Activated naive CD4-positive, alpha-beta T cell treated with anti-CD3 and anti-CD28 coated beads for 36 hours (primary cell): ENCODE measurements at regions of chr17 and their contacts with region 1.

Region 1: GRCh38 chr17:63697341-63698286 is 2.3 kb downstream of the LIMD2 start:
- DNase-seq: peak; percentile 88
- H3K4me3 Mint-ChIP-seq: peak overlapping the region; percentile 83
- H3K27ac Mint-ChIP-seq: peak overlapping the region; percentile 92
- H3K4me1 Mint-ChIP-seq: peaks cover 62% of the 10 kb centered on the region
- H3K27me3 Mint-ChIP-seq: no peaks in the 10 kb centered on the region

Region 2: GRCh38 chr17:63425482-63425881 is 272.1 kb before region 1 on chr17:
- CTCF ChIA-PET with region 1: interaction called, 4 read pairs
- intact Hi-C with region 1: loop called (anchors 5 kb)
- DNase-seq: peak; percentile 85
- H3K4me3 Mint-ChIP-seq: no peak overlapping the region
- H3K27ac Mint-ChIP-seq: no peak overlapping the region
- H3K4me1 Mint-ChIP-seq: peaks cover 21% of the 10 kb centered on the region
- H3K27me3 Mint-ChIP-seq: no peaks in the 10 kb centered on the region

Region 3: DNA sequence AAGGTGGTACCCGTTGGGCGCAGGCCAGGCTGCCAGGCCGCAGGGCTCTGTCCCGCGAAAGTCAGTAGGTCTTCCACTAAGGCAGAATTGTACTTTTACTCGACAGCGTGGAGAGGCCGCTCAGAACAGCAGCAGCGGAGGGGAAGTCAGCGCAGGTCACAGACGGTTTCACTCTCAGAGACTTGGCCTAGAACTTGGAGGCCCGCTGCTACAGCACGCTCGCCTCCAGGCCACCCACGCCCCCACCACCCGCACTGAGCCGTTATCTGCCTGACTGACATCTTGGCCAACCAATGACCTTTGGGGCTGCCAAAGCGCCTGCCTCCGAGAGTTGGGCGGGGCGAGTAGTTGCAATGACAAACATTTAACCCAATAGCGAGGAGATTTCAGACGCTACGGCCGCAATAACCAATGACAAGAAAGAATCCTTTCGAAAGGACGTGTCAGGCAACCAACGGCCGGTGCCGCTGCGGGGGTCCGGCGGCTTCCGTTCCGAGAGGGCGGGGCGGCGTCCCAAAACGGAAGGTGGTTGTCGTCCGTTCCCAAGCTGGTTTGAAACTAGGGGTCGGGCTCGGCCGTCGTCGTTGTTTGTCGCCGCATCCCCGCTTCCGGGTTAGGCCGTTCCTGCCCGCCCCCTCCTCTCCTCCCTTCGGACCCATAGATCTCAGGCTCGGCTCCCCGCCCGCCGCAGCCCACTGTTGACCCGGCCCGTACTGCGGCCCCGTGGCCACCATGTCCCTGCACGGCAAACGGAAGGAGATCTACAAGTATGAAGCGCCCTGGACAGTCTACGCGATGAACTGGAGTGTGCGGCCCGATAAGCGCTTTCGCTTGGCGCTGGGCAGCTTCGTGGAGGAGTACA is 147.4 kb before region 1 on chr17 and contains the start of gene DCAF7:
- CTCF ChIA-PET with region 1: no interaction called
- intact Hi-C with region 1: loop called (anchors 2 kb)
- DNase-seq: peak; percentile 100
- H3K4me3 Mint-ChIP-seq: peak within 1 kb of the TSS; percentile 82
- H3K27ac Mint-ChIP-seq: peak within 1 kb of the TSS; percentile 94
- H3K4me1 Mint-ChIP-seq: peaks cover 33% of the 10 kb centered on the region
- H3K27me3 Mint-ChIP-seq: no peaks in the 10 kb centered on the region
- total RNA-seq, gene DCAF7: 102 to 103 TPM

Region 4: GRCh38 chr17:63709098-63709497 is 11.5 kb after region 1 on chr17:
- CTCF ChIA-PET with region 1: interaction called, 14 read pairs
- intact Hi-C with region 1: loop called (anchors 1 kb)
- DNase-seq: no peak
- H3K4me3 Mint-ChIP-seq: no peak overlapping the region
- H3K27ac Mint-ChIP-seq: peak overlapping the region; percentile 57
- H3K4me1 Mint-ChIP-seq: peaks cover 59% of the 10 kb centered on the region
- H3K27me3 Mint-ChIP-seq: no peaks in the 10 kb centered on the region

Region 5: GRCh38 chr17:63741221-63742049 is 43.8 kb after region 1 on chr17 and contains the start of gene STRADA:
- CTCF ChIA-PET with region 1: interaction called, 6 read pairs
- intact Hi-C with region 1: loop called (anchors 1 kb)
- DNase-seq: peak; percentile 100
- H3K4me3 Mint-ChIP-seq: peak within 1 kb of the TSS; percentile 95
- H3K27ac Mint-ChIP-seq: peak within 1 kb of the TSS; percentile 99
- H3K4me1 Mint-ChIP-seq: peaks cover 20% of the 10 kb centered on the region
- H3K27me3 Mint-ChIP-seq: no peaks in the 10 kb centered on the region
- total RNA-seq, gene STRADA: 73.2 to 76.3 TPM

Region 6: DNA sequence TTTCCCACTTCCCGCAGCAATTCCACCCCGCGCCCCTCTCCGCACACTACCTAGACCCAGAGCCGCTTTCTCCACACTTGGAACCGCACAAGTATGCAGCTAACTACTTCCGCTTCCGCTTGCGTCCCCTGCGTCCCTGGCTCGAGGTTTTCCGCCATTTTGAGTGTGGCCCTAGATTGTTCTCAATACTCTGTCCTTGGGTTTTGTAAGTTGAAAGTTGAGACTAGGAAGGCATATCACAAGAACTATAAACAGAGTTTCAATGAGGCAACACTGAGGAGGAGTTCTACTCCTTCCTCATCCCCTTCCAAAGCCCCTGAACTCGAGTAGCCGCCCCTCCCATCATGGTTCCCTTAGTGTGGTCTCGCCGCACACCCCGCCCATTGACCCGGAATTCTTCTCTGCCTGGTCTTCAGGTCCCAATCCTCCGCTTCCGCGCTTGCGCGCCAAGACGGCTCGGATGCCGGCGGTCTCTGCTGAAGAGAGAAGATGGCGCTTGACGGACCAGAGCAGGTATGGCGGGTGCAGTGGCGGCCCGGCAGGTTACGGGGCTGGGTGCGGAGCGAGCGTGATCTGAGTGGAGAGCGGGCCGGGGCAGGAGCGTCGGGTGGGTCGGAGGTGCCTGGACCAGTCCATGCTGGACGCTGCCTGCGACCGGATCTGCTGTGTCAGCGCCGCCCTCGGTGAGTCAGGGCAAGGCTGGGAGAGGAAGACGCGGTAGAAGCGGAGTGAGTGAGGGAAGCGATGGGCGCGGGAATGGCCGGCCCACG is 129.6 kb after region 1 on chr17 and contains the starts of genes FTSJ3 and PSMC5:
- CTCF ChIA-PET with region 1: interaction called, 3 read pairs
- intact Hi-C with region 1: loop called (anchors 1 kb)
- DNase-seq: peak; percentile 97
- H3K4me3 Mint-ChIP-seq: peak within 1 kb of the TSS; percentile 96
- H3K27ac Mint-ChIP-seq: peak within 1 kb of the TSS; percentile 99
- H3K4me1 Mint-ChIP-seq: peaks cover 82% of the 10 kb centered on the region
- H3K27me3 Mint-ChIP-seq: no peaks in the 10 kb centered on the region
- total RNA-seq, gene FTSJ3: 25.3 to 26.2 TPM
- total RNA-seq, gene PSMC5: 144 to 154 TPM

Region 7: DNA sequence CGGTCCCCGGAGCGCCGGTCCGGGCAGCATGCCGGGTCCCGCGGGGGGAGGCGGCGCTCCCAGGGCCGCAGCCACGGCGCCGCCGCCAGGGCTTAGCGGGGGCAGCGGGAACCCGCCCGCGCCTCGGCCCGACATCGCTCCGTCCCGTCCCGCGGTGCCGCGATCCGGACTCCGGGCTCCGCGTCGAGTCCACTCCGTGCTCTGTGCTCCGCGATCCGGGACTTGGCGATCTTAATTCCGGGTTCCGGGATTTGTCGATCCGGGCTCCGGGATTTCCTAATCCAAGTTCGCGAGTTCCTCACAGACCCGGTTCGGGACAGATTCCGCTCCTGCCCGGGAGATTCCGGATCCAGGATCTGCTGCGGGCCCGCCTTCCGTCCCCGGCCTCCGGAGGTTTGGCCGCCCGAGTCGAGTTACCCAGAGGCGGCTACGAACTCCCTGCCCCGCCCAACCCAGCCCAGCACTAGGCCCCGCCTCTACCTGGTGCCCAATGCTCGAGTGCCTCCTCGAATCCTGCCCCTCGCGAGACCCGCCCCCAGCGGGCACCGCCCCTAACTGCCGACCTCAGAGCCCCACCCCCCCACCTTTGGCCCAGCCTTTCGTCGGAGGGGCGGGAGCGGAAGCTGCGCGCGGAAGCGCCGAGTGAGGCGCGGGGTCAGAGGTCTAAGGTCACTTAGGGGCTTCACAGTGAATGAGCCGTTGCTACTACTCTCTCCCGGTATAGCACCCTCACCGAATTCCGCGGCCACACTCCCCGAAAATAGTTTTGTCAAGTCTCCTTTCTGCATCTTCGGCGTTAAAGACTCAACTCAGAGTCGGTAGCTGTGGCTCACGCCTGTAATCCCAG is 145.1 kb after region 1 on chr17 and contains the start of gene SMARCD2:
- CTCF ChIA-PET with region 1: interaction called, 3 read pairs
- intact Hi-C with region 1: loop called (anchors 1 kb)
- DNase-seq: peak; percentile 100
- H3K4me3 Mint-ChIP-seq: peak within 1 kb of the TSS; percentile 94
- H3K27ac Mint-ChIP-seq: peak within 1 kb of the TSS; percentile 94
- H3K4me1 Mint-ChIP-seq: peaks cover 40% of the 10 kb centered on the region
- H3K27me3 Mint-ChIP-seq: no peaks in the 10 kb centered on the region
- total RNA-seq, gene SMARCD2: 98.5 to 107 TPM